ENCODE measurements at regions of chr6 and their contacts with region 1.

Region 1: GRCh38 chr6:154675602-154676088 is 57.6 kb upstream of the SCAF8 start:
- DNase-seq: peak; percentile 95
- H3K4me3 ChIP-seq: no peak overlapping the region
- H3K27ac ChIP-seq: no peak overlapping the region
- H3K4me1 ChIP-seq: no peaks in the 10 kb centered on the region
- H3K27me3 ChIP-seq: no peaks in the 10 kb centered on the region
- CTCF ChIP-seq: peak; percentile 94 to 96 (median 95)
- POLR2A ChIP-seq: no peak

Region 2: GRCh38 chr6:154247119-154247861 is 428.4 kb before region 1 on chr6:
- intact Hi-C with region 1: no loop called
- DNase-seq: no peak
- H3K4me3 ChIP-seq: no peak overlapping the region
- H3K27ac ChIP-seq: no peak overlapping the region
- H3K4me1 ChIP-seq: no peaks in the 10 kb centered on the region
- H3K27me3 ChIP-seq: no peaks in the 10 kb centered on the region
- CTCF ChIP-seq: no peak
- POLR2A ChIP-seq: no peak

Region 3: GRCh38 chr6:154555073-154555677 is 120.5 kb before region 1 on chr6:
- intact Hi-C with region 1: no loop called
- DNase-seq: no peak
- H3K4me3 ChIP-seq: no peak overlapping the region
- H3K27ac ChIP-seq: no peak overlapping the region
- H3K4me1 ChIP-seq: peaks cover 6% of the 10 kb centered on the region
- H3K27me3 ChIP-seq: no peaks in the 10 kb centered on the region
- CTCF ChIP-seq: no peak
- POLR2A ChIP-seq: no peak

Region 4: GRCh38 chr6:155174576-155175211 is 499.0 kb after region 1 on chr6:
- intact Hi-C with region 1: loop called (anchors 10 kb)
- DNase-seq: peak; percentile 70
- H3K4me3 ChIP-seq: no peak overlapping the region
- H3K27ac ChIP-seq: no peak overlapping the region
- H3K4me1 ChIP-seq: no peaks in the 10 kb centered on the region
- H3K27me3 ChIP-seq: no peaks in the 10 kb centered on the region
- CTCF ChIP-seq: peak; percentile 41 to 45 (median 41)
- POLR2A ChIP-seq: no peak

Measured in testis (tissue), 5 donors.